MCF 10A (cell line): ENCODE measurements at regions of chr10 and their contacts with region 1.

Region 1: DNA sequence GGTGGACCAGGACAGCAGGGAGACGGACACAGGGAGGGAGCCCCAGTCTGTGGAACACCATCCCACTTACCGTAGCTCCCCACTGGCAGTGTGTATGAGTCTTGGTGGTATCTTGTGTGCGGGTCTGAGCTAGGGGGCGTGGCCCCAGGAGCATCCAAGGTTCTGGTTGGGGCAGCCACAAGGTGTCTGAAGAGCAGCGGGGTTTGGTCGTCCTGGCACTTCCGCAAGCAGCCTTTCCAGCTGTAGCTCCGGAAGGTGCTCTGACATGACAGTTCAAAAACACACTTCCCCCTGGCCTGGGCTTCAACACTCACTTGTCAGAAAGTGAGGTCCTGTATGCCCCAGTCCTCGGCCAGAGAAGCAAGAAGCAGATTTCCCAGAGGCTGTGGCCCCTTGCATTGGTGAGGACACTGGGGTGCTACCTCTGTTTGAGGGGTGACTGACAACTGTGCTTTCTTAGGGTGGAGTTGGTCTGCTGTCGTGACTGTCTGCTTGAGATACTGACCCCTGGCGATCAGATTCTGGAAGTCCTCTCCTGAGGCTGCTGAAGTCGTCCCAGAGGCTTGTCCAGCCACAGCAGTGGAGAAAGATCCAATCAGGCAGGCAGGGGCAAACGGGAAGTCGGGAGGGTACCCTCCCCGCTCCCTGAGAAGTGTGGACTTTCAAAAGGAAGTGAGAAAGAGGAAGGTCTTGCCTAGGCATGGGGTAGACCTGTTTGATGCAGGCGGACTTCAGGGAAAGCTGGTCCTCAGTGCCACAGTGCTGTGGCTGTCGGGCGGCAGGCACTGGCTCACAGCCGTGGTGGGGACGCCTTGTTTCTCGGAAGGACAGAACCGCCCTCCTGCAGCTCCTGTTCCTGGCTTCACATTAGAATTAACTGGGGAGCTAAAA is 51.4 kb upstream of the PFKFB3 start:
- DNase-seq: peak; percentile 43
- H3K4me3 Mint-ChIP-seq: no peak overlapping the region
- H3K27ac Mint-ChIP-seq: no peak overlapping the region
- H3K4me1 Mint-ChIP-seq: peaks cover 6% of the 10 kb centered on the region
- H3K27me3 Mint-ChIP-seq: no peaks in the 10 kb centered on the region
- CTCF ChIP-seq: peak; percentile 66

Region 2: GRCh38 chr10:6108603-6109443 is 42.5 kb before region 1 on chr10:
- CTCF ChIA-PET with region 1: interaction called, 33 read pairs
- POLR2A ChIA-PET with region 1: no interaction called
- intact Hi-C with region 1: loop called (anchors 1 kb)
- DNase-seq: peak; percentile 51
- H3K4me3 Mint-ChIP-seq: no peak overlapping the region
- H3K27ac Mint-ChIP-seq: no peak overlapping the region
- H3K4me1 Mint-ChIP-seq: peaks cover 11% of the 10 kb centered on the region
- H3K27me3 Mint-ChIP-seq: no peaks in the 10 kb centered on the region
- CTCF ChIP-seq: peak; percentile 76

Region 3: DNA sequence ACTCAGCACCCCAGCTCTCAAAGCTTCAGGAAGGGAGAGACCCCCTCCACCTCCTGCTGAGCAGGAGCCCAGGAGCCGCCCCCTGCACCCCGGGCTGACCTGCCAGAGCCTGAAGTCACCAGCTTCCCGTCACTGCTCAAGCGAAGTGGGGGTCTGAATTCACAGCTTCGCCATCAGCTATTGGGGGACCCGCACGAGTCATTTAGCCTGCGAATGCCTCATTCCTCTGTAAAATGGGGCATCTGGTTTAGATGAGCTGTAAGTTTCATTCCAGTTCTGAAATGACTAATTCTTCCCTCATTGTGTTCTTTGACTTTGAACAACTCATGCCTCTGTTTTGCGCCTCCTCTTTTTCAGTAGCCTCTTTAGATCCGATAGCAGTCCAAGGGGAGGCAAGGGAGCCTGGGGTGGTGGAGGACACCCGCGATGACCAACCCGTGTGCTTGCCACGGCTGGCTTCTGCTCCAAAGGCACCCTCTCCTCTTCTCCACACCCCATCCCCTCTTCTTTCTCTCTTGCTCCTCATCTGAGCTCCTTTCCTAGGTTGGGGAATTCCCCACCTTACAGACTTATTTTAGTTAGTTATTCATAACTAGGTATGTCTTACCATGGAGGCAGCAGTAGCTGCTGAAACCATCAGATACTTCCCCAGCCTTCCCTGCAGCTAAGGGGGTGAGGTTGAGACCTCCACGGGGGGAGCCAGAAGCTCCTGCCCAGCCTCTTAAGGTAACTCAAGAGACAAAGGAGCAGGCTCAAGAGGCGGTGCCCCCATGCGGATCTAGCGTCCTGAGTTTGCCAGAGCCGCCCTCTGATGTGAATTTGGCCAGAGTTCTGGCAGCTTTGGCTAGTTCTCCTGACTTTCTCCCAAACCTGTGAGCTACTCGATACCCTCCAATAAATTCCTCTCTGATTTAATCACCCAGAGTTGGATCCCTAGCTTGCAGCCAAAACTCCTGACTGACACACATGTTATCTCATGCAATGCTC is 14.8 kb before region 1 on chr10:
- CTCF ChIA-PET with region 1: interaction called, 12 read pairs
- POLR2A ChIA-PET with region 1: no interaction called
- intact Hi-C with region 1: no loop called
- DNase-seq: peak; percentile 38
- H3K4me3 Mint-ChIP-seq: no peak overlapping the region
- H3K27ac Mint-ChIP-seq: no peak overlapping the region
- H3K4me1 Mint-ChIP-seq: peaks cover 15% of the 10 kb centered on the region
- H3K27me3 Mint-ChIP-seq: peaks cover 12% of the 10 kb centered on the region
- CTCF ChIP-seq: no peak